ENCODE measurements at regions of chr13 and their contacts with region 1.

Region 1: GRCh38 chr13:39209731-39210531 is 171.7 kb downstream of the NHLRC3 start:
- DNase-seq: no peak
- H3K4me3 ChIP-seq: no peak overlapping the region
- H3K27ac ChIP-seq: no peak overlapping the region
- H3K27me3 ChIP-seq: no peaks in the 10 kb centered on the region
- CTCF ChIP-seq: no peak

Region 2: GRCh38 chr13:39196958-39197646 is 12.8 kb before region 1 on chr13:
- CTCF ChIA-PET with region 1: no interaction called
- POLR2A ChIA-PET with region 1: no interaction called
- DNase-seq: no peak
- H3K4me3 ChIP-seq: no peak overlapping the region
- H3K27ac ChIP-seq: no peak overlapping the region
- H3K27me3 ChIP-seq: no peaks in the 10 kb centered on the region
- CTCF ChIP-seq: no peak

Region 3: DNA sequence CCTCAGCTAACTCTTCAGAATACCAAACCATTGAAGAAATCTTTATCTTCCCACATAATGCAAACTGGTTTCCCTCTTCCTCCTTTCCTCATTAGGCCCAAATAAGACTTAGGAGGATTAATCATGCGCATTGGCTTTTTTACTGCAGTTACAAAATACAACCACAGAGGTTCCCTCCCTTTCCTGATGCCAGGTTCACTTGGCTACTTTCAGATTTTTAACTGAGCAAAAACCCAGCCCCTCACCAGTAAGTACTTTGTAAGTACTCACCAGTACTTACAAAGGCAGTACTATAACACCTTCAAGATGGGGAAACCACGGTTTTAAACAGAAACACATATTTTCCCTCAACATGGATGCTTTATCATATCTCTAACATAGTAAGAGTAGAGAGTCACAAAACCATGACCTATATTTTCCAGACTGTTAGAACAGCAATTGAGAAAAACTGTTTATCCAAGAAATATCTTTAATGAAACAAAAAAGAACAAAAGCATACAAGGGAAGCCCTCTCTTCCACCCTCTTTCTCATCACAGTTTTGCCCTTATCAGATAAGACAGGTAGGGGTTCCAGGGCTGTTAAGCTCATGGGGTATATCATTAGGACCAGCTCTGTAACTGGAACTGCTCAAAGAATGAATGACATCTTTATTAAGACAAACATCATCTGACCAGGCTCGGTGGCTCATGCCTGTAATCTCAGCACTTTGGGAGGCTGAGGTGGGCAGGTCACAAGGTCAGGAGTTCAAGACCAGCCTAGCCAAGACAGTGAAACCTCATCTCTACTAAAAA is 1443.8 kb after region 1 on chr13:
- CTCF ChIA-PET with region 1: no interaction called
- POLR2A ChIA-PET with region 1: interaction called, 14 read pairs
- DNase-seq: no peak
- H3K4me3 ChIP-seq: no peak overlapping the region
- H3K27ac ChIP-seq: no peak overlapping the region
- H3K27me3 ChIP-seq: no peaks in the 10 kb centered on the region
- CTCF ChIP-seq: no peak

Measured in AG04450 (cell line).